ENCODE measurements at regions of chr9 and their contacts with region 1.

Region 1: DNA sequence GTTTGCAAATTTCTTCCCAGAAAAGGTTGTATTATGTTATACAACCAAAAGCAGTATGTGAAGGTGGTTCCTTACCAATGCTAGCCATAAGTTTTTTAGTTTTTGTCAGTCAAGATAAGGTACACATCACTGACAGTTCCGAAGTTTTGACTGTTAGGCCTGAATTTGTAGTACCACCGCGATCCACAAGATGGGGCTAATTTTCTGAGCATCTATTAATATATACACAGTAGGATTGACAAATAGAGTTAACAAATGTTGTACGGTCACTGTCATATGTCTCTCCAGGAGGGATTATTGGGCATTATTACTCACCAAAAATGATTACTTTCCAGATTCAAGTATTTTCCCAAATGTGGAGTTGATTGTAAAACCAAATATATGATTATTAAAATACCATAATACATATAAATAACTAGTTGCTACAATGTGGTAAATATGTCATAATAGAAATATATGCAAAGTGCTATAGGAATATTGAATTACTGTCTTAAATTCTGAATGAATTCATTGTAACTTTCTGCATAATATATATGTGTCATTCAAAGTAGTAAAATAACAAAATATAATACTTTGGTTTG is 28.4 kb upstream of the LRRC19 start:
- DNase-seq: peak in 2 of 3 donors; percentile 43 to 49
- ATAC-seq: peak; percentile 52 to 78
- H3K4me3 ChIP-seq: no peak overlapping the region
- H3K27ac ChIP-seq: no peak overlapping the region
- H3K4me1 ChIP-seq: no peaks in the 10 kb centered on the region
- H3K27me3 ChIP-seq: no peaks in the 10 kb centered on the region

Region 2: GRCh38 chr9:27194401-27195091 is 160.6 kb after region 1 on chr9:
- intact Hi-C with region 1: loop called in 1 of 4 experiments (anchors 10 kb)
- DNase-seq: no peak
- ATAC-seq: peak in 1 of 2 donors; percentile 55
- H3K4me3 ChIP-seq: no peak overlapping the region
- H3K27ac ChIP-seq: no peak overlapping the region
- H3K4me1 ChIP-seq: peaks cover 4% of the 10 kb centered on the region
- H3K27me3 ChIP-seq: no peaks in the 10 kb centered on the region

Region 3: DNA sequence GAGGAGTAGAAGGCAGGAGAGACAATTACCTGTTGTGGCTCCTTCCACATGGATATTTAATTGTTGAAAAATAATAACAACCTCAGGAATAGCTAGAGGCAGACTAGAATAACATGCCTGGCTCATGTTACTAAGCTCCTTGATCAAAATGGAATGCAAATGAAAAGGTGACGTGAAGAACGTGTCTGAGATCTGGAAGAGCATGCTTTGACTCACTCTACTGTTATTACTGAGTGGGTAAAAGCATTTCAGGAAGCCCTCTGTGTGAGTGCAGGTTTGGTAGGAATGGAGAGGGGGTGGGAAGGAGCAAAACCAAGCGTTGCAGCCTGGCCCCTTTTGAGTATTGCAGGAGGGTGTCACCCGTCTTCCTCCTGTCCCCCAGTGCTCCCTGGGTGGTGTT is 178.3 kb after region 1 on chr9:
- intact Hi-C with region 1: loop called in 1 of 4 experiments (anchors 10 kb)
- DNase-seq: no peak
- ATAC-seq: no peak
- H3K4me3 ChIP-seq: no peak overlapping the region
- H3K27ac ChIP-seq: no peak overlapping the region
- H3K4me1 ChIP-seq: no peaks in the 10 kb centered on the region
- H3K27me3 ChIP-seq: no peaks in the 10 kb centered on the region

Region 4: GRCh38 chr9:27276193-27277030 is 242.5 kb after region 1 on chr9:
- intact Hi-C with region 1: loop called (anchors 5 kb)
- DNase-seq: no peak
- ATAC-seq: peak in 1 of 2 donors; percentile 57
- H3K4me3 ChIP-seq: no peak overlapping the region
- H3K27ac ChIP-seq: no peak overlapping the region
- H3K4me1 ChIP-seq: no peaks in the 10 kb centered on the region
- H3K27me3 ChIP-seq: no peaks in the 10 kb centered on the region

Region 5: GRCh38 chr9:27333241-27334052 is 299.5 kb after region 1 on chr9:
- intact Hi-C with region 1: no loop called
- DNase-seq: peak; percentile 62 to 73 (median 71)
- ATAC-seq: peak; percentile 94
- H3K4me3 ChIP-seq: no peak overlapping the region
- H3K27ac ChIP-seq: no peak overlapping the region
- H3K4me1 ChIP-seq: peaks cover 6% of the 10 kb centered on the region
- H3K27me3 ChIP-seq: no peaks in the 10 kb centered on the region

Measured in right cardiac atrium (tissue), 5 donors.